ENCODE measurements at regions of chr14 and their contacts with region 1.

Region 1: GRCh38 chr14:90228478-90228877 is 27.9 kb upstream of the PSMC1 start:
- DNase-seq: no peak
- CTCF ChIP-seq: no peak

Region 2: DNA sequence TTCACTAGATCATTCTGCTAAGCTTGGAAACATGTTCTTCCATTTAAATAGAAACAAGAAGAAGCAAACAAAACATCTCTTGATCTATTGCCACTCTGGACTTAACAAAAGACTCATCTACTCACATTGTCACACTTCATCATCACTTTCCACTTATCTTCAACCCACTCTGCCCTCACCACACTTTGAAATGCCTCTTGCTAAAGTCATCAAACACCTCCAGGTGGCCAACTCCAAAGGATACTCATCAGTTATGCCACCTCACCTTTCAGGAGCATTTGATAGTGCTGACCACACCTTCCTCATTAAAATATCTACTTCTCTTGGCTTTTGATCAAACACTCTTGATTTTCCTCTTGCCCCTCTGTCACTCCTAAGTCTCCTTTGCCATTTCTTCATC is 281.1 kb before region 1 on chr14:
- in situ Hi-C with region 1: loop called (anchors 10 kb)
- DNase-seq: no peak
- CTCF ChIP-seq: no peak

Region 3: GRCh38 chr14:90168425-90169105 is 59.9 kb before region 1 on chr14:
- in situ Hi-C with region 1: no loop called
- DNase-seq: no peak
- CTCF ChIP-seq: no peak

Region 4: DNA sequence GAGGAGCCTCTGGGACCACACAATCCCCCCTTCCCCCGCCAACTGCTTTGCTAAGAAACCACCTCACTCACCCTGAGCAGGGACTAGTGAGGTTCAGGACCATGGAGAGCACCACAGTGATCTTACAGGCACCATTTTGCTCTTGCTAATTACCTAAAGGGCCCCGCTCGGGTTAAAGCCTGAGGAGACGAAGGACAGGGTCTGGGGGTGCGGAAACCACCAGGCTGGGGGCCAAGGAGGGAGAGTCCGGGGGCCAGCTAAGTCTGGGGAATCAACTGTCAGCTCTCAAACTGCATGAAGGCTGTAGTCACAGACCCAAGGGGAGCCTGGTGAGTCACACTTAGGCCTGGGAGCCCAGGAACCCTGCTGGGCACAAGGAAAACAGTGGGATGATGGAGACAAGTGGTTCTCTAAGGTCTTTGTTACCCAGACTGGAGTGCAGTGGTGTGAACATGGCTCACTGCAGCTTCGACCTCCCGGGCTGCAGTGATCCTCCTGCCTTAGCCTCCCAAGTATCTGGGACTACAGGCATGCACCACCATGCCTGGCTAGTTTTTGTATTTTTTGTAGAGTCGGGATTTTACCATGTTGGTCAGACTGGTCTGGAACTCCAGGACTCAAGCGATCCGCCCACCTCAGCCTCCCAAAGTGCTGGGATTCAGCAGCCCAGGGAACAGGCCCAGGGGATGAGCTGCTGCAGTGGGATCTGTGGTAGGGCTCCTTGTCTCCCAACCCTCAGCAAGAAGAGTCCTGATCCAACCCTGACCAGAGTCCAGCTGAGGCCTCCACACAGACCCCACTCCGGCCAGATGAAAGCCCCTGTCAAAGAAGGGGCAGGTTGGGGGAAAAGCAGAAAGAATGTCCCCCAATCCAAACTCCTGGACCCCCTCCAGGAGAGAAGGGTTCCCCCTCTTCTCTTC is 267.1 kb after region 1 on chr14:
- in situ Hi-C with region 1: no loop called
- DNase-seq: peak; percentile 83
- CTCF ChIP-seq: no peak

Measured in GM13977 (cell line).